ENCODE measurements at regions of chr19 and their contacts with region 1.

Region 1: DNA sequence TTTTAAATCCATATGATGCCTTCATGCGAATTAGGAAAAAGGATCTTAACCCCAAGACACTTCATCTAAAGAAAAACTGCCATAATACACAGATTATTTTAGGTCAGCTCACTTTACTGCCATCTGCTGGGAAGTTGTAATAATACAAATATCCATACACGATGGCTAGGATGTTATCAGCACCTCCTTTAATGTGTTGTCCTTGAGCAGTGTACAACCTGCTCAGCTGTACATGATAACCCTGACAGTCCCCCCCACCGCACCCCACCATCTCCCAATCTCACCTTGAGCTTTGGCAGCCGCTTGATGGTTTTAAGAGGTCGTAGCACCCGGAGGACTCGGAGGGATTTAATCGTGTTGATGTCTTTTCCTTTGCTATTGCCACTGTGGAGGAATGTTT is 112.2 kb downstream of the IER2 start:
- DNase-seq: peak in 2 of 7 donors; percentile 5 to 11
- H3K4me3 ChIP-seq: no peak overlapping the region
- H3K27ac ChIP-seq: no peak overlapping the region
- H3K4me1 ChIP-seq: no peaks in the 10 kb centered on the region
- H3K27me3 ChIP-seq: no peaks in the 10 kb centered on the region
- CTCF ChIP-seq: peak; percentile 22 to 73 (median 54)
- POLR2A ChIP-seq: no peak

Region 2: DNA sequence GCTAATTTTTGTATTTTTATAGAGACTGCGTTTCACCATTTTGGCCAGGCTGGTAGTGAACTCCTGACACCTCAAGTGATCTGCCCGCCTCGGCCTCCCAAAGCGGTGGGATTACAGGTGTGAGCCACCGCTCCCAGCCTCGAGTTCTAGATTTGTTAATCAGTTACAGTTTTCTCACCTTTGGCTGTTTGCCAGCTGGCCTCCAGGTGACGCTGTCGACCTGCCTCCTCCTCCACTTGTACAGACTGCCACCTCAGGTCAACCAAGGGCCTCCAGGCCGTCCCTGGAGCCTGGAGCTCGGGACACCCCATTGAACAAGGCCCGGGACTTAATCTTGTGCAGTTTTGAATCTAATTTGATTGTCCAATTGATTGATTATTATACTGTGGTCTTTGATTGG is 66.8 kb before region 1 on chr19:
- intact Hi-C with region 1: loop called (anchors 2 to 5 kb)
- DNase-seq: no peak
- H3K4me3 ChIP-seq: no peak overlapping the region
- H3K27ac ChIP-seq: no peak overlapping the region
- H3K4me1 ChIP-seq: no peaks in the 10 kb centered on the region
- H3K27me3 ChIP-seq: no peaks in the 10 kb centered on the region
- CTCF ChIP-seq: no peak
- POLR2A ChIP-seq: no peak

Measured in adrenal gland (tissue), 19 donors.